Transverse colon (tissue), 4 donors: ENCODE measurements at regions of chr19 and their contacts with region 1.

Region 1: GRCh38 chr19:38335949-38336637 is 463 bp downstream of the CATSPERG start:
- DNase-seq: peak; percentile 98
- H3K4me3 ChIP-seq: peak overlapping the region; percentile 63 to 92 (median 84)
- H3K27ac ChIP-seq: peak overlapping the region; percentile 98 to 100 (median 99)
- H3K4me1 ChIP-seq: peaks cover 5 to 22% (median 7%) of the 10 kb centered on the region in 4 donors
- H3K27me3 ChIP-seq: no peaks in the 10 kb centered on the region
- CTCF ChIP-seq: no peak
- EP300 ChIP-seq: no peak
- POLR2A ChIP-seq: peak; percentile 91

Region 2: DNA sequence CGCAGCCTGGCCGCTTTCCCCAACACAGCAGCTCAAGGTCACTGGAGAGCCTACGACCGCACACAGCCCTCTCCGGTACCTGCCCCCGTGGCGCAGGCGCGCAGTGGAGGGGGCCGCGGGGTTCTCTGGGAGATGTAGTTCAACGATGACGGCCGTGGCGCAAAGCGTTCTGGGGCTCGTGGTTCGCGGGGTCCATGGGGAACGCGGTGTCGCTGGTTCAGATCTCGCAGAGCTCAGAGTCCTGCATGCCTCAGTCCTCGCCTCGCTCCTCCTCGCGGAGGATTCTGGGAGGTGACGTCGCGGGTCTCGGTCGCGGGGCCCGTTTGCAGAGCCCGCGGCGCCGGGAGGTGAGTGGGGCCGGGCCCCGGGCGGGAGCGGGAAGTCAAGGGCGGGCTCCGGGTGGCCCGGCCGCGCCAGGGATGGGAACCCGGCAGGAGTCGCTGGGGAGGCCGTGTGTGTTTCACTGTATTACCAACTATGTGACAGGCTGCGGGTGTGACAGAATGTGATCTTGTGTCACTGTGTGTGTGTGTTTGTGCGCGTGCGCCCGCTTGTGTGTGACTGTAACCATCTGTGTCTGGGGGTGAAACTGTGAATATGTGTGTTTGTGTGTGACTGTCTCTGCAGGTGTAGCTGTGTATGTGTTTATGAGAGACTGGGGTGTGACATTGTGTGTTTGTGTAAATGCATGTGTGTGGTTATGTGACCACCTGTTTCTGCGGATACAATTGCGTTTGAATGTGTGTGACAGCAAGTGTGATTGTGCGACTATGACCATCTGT is 965.0 kb before region 1 on chr19 and contains the start of gene ZNF527:
- in situ Hi-C with region 1: no loop called
- intact Hi-C with region 1: loop called (anchors 5 kb)
- DNase-seq: peak; percentile 98
- H3K4me3 ChIP-seq: peak within 1 kb of the TSS; percentile 44 to 69 (median 57)
- H3K27ac ChIP-seq: peak within 1 kb of the TSS; percentile 83 to 91 (median 86)
- H3K4me1 ChIP-seq: peaks cover 4 to 12% (median 5%) of the 10 kb centered on the region in 4 donors
- H3K27me3 ChIP-seq: no peaks in the 10 kb centered on the region
- CTCF ChIP-seq: peak in 1 of 5 experiments; percentile 2
- EP300 ChIP-seq: no peak
- POLR2A ChIP-seq: peak; percentile 92
- total RNA-seq, gene ZNF527: 3.4 to 29.9 (median 7.1) TPM

Region 3: DNA sequence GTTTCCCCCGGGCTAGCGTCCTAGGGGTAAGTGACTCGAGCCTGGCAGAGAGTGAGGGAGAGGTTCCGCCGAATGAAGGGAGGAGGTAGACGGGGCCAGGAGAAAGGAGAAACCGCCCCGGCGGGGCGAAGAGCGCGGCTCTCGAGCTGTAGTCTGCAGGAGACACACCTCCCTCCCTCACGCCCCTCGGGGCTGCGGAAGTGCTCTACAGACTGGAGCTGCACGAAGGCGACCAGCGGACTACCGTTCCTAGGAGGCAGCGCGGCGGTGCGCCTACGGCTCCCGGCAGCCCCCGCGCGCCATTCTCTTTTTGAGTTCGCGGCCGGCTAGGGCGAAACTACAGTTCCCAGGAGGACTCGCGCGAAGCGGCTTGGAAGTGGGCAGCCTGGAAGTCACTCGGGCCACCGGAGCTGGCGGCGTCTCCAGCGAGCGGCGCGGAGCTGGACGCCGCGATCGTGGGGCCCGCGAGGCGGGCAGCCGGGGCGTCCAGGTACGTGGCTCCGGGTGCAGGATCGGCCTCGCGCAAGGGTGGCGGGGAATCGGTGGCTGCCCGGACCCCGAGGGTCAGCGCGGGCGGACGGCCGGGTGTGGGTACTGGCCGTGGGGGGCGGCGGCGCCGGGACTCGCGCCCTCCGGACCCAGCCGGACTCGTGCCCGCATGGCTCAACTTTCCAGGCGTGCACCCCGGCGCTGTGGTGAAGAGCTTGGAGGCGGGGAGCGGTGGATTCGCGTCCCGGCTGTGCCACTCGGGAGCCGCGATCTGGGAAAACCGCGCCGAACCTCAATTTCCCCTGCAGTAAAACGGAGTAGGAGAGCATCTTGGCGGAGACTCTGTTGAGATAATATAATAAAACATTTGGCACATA is 429.0 kb before region 1 on chr19 and contains the start of gene SIPA1L3:
- in situ Hi-C with region 1: loop called in 3 of 4 experiments (anchors 25 kb)
- intact Hi-C with region 1: no loop called
- DNase-seq: peak; percentile 97
- H3K4me3 ChIP-seq: peak within 1 kb of the TSS; percentile 88 to 98 (median 96)
- H3K27ac ChIP-seq: peak within 1 kb of the TSS; percentile 78 to 87 (median 85)
- H3K4me1 ChIP-seq: peaks cover 4 to 18% (median 13%) of the 10 kb centered on the region in 4 donors
- H3K27me3 ChIP-seq: no peaks in the 10 kb centered on the region
- CTCF ChIP-seq: peak in 1 of 5 experiments; percentile 1
- EP300 ChIP-seq: no peak
- POLR2A ChIP-seq: peak; percentile 49
- total RNA-seq, gene SIPA1L3: 191 to 284 (median 231) TPM

Region 4: GRCh38 chr19:38115271-38115802 is 220.8 kb before region 1 on chr19:
- in situ Hi-C with region 1: no loop called
- intact Hi-C with region 1: no loop called
- DNase-seq: no peak
- H3K4me3 ChIP-seq: no peak overlapping the region
- H3K27ac ChIP-seq: no peak overlapping the region
- H3K4me1 ChIP-seq: no peaks in the 10 kb centered on the region
- H3K27me3 ChIP-seq: no peaks in the 10 kb centered on the region
- CTCF ChIP-seq: no peak
- EP300 ChIP-seq: no peak
- POLR2A ChIP-seq: no peak

Region 5: GRCh38 chr19:38245826-38246498 is 90.1 kb before region 1 on chr19:
- in situ Hi-C with region 1: loop called in 3 of 4 experiments (anchors 5 kb)
- intact Hi-C with region 1: loop called (anchors 2 kb)
- DNase-seq: no peak
- H3K4me3 ChIP-seq: no peak overlapping the region
- H3K27ac ChIP-seq: peak overlapping the region; percentile 46 to 88 (median 68)
- H3K4me1 ChIP-seq: peaks cover 14 to 55% (median 29%) of the 10 kb centered on the region in 4 donors
- H3K27me3 ChIP-seq: no peaks in the 10 kb centered on the region
- CTCF ChIP-seq: no peak
- EP300 ChIP-seq: no peak
- POLR2A ChIP-seq: no peak

Region 6: DNA sequence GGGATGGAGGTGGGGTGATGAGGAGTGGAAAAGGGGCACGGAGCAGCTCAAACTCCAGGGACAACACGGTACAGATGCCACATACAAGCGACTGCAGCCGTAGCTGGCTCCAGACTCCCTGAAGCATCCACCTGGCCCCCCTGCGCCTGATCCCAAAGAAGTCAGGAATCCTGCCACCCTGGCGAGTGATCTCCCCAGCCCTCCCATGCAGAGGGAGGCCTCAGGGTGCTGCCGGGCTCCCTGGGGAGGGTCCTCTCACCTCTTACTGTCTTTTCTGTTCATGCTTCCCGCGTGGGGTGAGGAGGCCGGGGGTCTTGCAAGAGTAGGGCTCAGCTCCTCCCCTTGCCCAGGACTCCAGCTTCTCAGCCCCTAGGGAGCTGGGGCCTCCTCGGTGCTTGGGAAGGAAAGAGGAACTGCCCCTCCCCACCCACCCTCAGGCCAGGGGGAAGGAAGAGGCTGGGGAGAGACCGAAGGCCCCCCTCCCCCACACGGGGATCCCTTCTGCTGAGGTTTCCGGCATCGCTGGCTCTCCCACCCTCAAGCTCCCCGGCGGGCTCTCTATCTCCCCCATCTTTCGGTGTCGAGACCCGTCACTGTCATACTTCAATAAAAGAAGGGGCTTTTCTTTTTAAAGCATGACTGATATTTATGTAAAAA is 89.8 kb after region 1 on chr19 and contains the start of gene RASGRP4:
- in situ Hi-C with region 1: no loop called
- intact Hi-C with region 1: no loop called
- DNase-seq: peak; percentile 26
- H3K4me3 ChIP-seq: peak within 1 kb of the TSS in 2 of 4 donors; percentile 5
- H3K27ac ChIP-seq: no peak within 1 kb of the TSS
- H3K4me1 ChIP-seq: no peaks in the 10 kb centered on the region
- H3K27me3 ChIP-seq: peaks cover 18% of the 10 kb centered on the region
- CTCF ChIP-seq: no peak
- EP300 ChIP-seq: no peak
- POLR2A ChIP-seq: no peak
- total RNA-seq, gene RASGRP4: 1.5 to 19.8 (median 1.7) TPM in 3 of 4 donors, not detected in the other